MCF 10A (cell line): ENCODE measurements at regions of chr5 and their contacts with region 1.

Region 1: GRCh38 chr5:33313150-33313549 is 127.6 kb upstream of the TARS1 start:
- DNase-seq: peak; percentile 95
- H3K4me3 Mint-ChIP-seq: no peak overlapping the region
- H3K27ac Mint-ChIP-seq: peak overlapping the region; percentile 97
- H3K4me1 Mint-ChIP-seq: peaks cover 36% of the 10 kb centered on the region
- H3K27me3 Mint-ChIP-seq: no peaks in the 10 kb centered on the region
- CTCF ChIP-seq: no peak

Region 2: DNA sequence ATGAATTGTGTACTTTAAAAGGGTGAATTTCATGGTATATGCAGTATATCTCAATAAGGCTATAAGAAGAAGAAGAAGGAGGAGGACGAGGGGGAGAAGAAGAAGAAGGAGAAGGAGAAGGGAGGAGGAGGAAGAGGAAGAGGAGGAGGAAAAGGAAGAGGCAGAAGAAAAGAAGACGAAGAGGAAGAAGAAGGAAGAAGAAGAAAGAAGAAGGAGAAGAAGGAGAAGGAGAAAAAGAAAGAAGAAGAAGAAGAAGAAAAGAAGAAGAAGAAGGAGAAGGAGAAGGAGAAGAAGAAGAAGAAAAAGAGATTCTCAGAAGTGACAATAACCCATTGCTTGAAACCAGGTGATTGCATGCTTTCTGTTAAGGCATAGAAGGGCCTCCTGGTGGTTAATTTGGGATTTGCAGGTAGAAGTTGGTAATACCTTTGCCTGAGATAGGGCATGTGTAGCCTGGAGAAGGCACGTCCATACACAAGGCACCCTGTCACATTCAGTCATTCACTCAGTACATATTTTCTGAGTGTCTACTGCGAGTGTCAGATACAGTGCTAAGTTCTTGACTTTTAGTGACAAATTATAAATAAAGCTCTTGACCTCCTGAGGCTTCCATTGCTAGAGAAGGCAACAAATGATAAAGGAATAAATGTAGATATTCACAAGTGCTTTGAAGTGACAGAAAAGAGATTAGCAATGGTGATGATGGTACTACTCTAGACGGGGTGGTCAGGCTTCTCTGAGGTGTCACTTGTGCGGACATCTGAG is 370.7 kb before region 1 on chr5:
- CTCF ChIA-PET with region 1: no interaction called
- POLR2A ChIA-PET with region 1: no interaction called
- intact Hi-C with region 1: no loop called
- DNase-seq: peak; percentile 65
- H3K4me3 Mint-ChIP-seq: no peak overlapping the region
- H3K27ac Mint-ChIP-seq: no peak overlapping the region
- H3K4me1 Mint-ChIP-seq: no peaks in the 10 kb centered on the region
- H3K27me3 Mint-ChIP-seq: no peaks in the 10 kb centered on the region
- CTCF ChIP-seq: peak; percentile 30

Region 3: GRCh38 chr5:33272288-33272687 is 40.9 kb before region 1 on chr5:
- CTCF ChIA-PET with region 1: interaction called, 4 read pairs
- POLR2A ChIA-PET with region 1: interaction called, 19 read pairs
- intact Hi-C with region 1: no loop called
- DNase-seq: peak; percentile 95
- H3K4me3 Mint-ChIP-seq: no peak overlapping the region
- H3K27ac Mint-ChIP-seq: peak overlapping the region; percentile 83
- H3K4me1 Mint-ChIP-seq: peaks cover 17% of the 10 kb centered on the region
- H3K27me3 Mint-ChIP-seq: no peaks in the 10 kb centered on the region
- CTCF ChIP-seq: no peak

Region 4: GRCh38 chr5:33343676-33344327 is 30.7 kb after region 1 on chr5:
- CTCF ChIA-PET with region 1: no interaction called
- POLR2A ChIA-PET with region 1: interaction called, 23 read pairs
- intact Hi-C with region 1: no loop called
- DNase-seq: peak; percentile 54
- H3K4me3 Mint-ChIP-seq: peak overlapping the region; percentile 12
- H3K27ac Mint-ChIP-seq: peak overlapping the region; percentile 37
- H3K4me1 Mint-ChIP-seq: peaks cover 13% of the 10 kb centered on the region
- H3K27me3 Mint-ChIP-seq: no peaks in the 10 kb centered on the region
- CTCF ChIP-seq: no peak

Region 5: GRCh38 chr5:33537240-33537639 is 224.1 kb after region 1 on chr5:
- CTCF ChIA-PET with region 1: no interaction called
- POLR2A ChIA-PET with region 1: no interaction called
- intact Hi-C with region 1: no loop called
- DNase-seq: no peak
- H3K4me3 Mint-ChIP-seq: no peak overlapping the region
- H3K27ac Mint-ChIP-seq: no peak overlapping the region
- H3K4me1 Mint-ChIP-seq: no peaks in the 10 kb centered on the region
- H3K27me3 Mint-ChIP-seq: peaks cover 18% of the 10 kb centered on the region
- CTCF ChIP-seq: no peak